Esophagus muscularis mucosa (tissue), 4 donors: ENCODE measurements at regions of chr7 and their contacts with region 1.

Region 1: GRCh38 chr7:21507626-21508343 is 35.1 kb upstream of the DNAH11 start:
- DNase-seq: no peak
- H3K4me3 ChIP-seq: no peak overlapping the region
- H3K27ac ChIP-seq: no peak overlapping the region
- H3K4me1 ChIP-seq: no peaks in the 10 kb centered on the region
- H3K27me3 ChIP-seq: no peaks in the 10 kb centered on the region
- CTCF ChIP-seq: peak; percentile 68 to 81 (median 75)
- EP300 ChIP-seq: no peak
- POLR2A ChIP-seq: no peak

Region 2: GRCh38 chr7:21253740-21254687 is 253.8 kb before region 1 on chr7:
- intact Hi-C with region 1: loop called (anchors 5 kb)
- DNase-seq: no peak
- H3K4me3 ChIP-seq: no peak overlapping the region
- H3K27ac ChIP-seq: no peak overlapping the region
- H3K4me1 ChIP-seq: no peaks in the 10 kb centered on the region
- H3K27me3 ChIP-seq: peaks cover 0 to 72% (median 14%) of the 10 kb centered on the region in 4 donors
- CTCF ChIP-seq: peak in 2 of 3 experiments; percentile 37 to 56
- EP300 ChIP-seq: no peak
- POLR2A ChIP-seq: no peak